T-cell (primary cell): ENCODE measurements at regions of chr10 and their contacts with region 1.

Region 1: DNA sequence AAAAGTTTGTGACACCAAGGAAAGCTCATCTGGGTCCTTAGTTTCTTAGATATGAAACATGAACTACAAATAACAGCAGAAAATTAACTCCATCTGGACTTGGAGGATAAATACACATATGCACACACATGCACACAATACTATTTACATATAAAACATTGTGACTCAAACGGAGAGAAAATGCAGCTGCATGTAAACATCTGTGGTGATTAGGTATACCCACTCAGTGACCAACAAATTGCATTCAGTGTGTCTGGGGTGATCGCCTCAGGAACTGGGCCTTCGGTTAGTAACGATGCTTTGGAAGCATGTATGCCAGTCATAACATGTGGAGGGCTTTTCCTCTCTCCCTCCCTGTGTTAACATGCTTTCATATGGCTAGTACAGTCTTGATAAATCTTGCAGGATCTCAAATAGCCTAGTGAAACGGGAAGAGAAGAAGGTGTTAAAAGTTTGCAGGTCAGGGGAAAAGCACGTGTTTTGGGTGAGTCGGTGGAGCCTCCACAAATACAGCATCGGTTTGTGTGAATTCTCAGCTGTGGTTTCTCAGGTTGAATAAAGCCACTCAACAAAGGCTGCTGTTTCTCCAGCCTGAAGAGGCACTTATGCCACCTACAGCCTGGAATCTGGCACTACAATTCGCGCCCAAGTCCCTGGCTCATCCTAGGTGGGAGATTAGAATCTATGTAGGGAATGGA is 8.7 kb upstream of the GLRX3 start:
- DNase-seq: peak in 32 of 35 experiments; percentile 11 to 77 (median 35)
- ATAC-seq: peak; percentile 84 to 98 (median 92)
- H3K4me3 ChIP-seq: no peak overlapping the region
- H3K4me3 Mint-ChIP-seq: no peak overlapping the region
- H3K27ac ChIP-seq: no peak overlapping the region
- H3K27ac Mint-ChIP-seq: no peak overlapping the region
- H3K4me1 ChIP-seq: peaks cover 0 to 5% of the 10 kb centered on the region in 2 experiments
- H3K4me1 Mint-ChIP-seq: peaks cover 6 to 8% (median 7%) of the 10 kb centered on the region in 3 donors
- H3K27me3 ChIP-seq: peaks cover 0 to 32% of the 10 kb centered on the region in 2 experiments
- H3K27me3 Mint-ChIP-seq: peaks cover 19 to 33% of the 10 kb centered on the region in 2 donors

Region 2: GRCh38 chr10:129888784-129889616 is 238.5 kb before region 1 on chr10:
- CTCF ChIA-PET with region 1: interaction called, 3 to 12 read pairs
- POLR2A ChIA-PET with region 1: no interaction called
- DNase-seq: peak in 22 of 35 experiments; percentile 5 to 47 (median 20)
- ATAC-seq: peak in 2 of 4 experiments; percentile 23 to 37
- H3K4me3 ChIP-seq: no peak overlapping the region
- H3K4me3 Mint-ChIP-seq: no peak overlapping the region
- H3K27ac ChIP-seq: no peak overlapping the region
- H3K27ac Mint-ChIP-seq: no peak overlapping the region
- H3K4me1 ChIP-seq: no peaks in the 10 kb centered on the region
- H3K4me1 Mint-ChIP-seq: no peaks in the 10 kb centered on the region
- H3K27me3 ChIP-seq: peaks cover 0 to 10% of the 10 kb centered on the region in 2 experiments
- H3K27me3 Mint-ChIP-seq: peaks cover 3% of the 10 kb centered on the region in 2 donors